Endothelial cell of umbilical vein (primary cell): ENCODE measurements at regions of chr10 and their contacts with region 1.

Region 1: GRCh38 chr10:117174439-117175214 is 22.7 kb upstream of the KCNK18 start:
- DNase-seq: peak; percentile 81
- H3K4me3 ChIP-seq: peak overlapping the region in 1 of 3 experiments; percentile 16
- H3K27ac ChIP-seq: no peak overlapping the region
- H3K4me1 ChIP-seq: peaks cover 9% of the 10 kb centered on the region
- H3K27me3 ChIP-seq: peaks cover 27 to 32% of the 10 kb centered on the region in 2 experiments
- CTCF ChIP-seq: peak; percentile 83 to 88
- POLR2A ChIP-seq: no peak

Region 2: GRCh38 chr10:116742367-116743265 is 432.0 kb before region 1 on chr10 and contains the start of gene HSPA12A:
- CTCF ChIA-PET with region 1: interaction called, 14 read pairs
- POLR2A ChIA-PET with region 1: no interaction called
- dilution Hi-C with region 1: no loop called
- intact Hi-C with region 1: loop called (anchors 2 kb)
- DNase-seq: peak; percentile 62
- H3K4me3 ChIP-seq: peak within 1 kb of the TSS; percentile 29 to 34 (median 31)
- H3K27ac ChIP-seq: no peak within 1 kb of the TSS
- H3K4me1 ChIP-seq: peaks cover 7% of the 10 kb centered on the region
- H3K27me3 ChIP-seq: peaks cover 18 to 21% of the 10 kb centered on the region in 2 experiments
- CTCF ChIP-seq: no peak
- POLR2A ChIP-seq: no peak
- total RNA-seq, gene HSPA12A: 0.22 and 0.30 TPM in 2 replicates

Region 3: GRCh38 chr10:116809483-116810119 is 365.0 kb before region 1 on chr10:
- CTCF ChIA-PET with region 1: interaction called, 10 read pairs
- POLR2A ChIA-PET with region 1: no interaction called
- dilution Hi-C with region 1: loop called (anchors 25 kb)
- intact Hi-C with region 1: no loop called
- DNase-seq: no peak
- H3K4me3 ChIP-seq: no peak overlapping the region
- H3K27ac ChIP-seq: no peak overlapping the region
- H3K4me1 ChIP-seq: no peaks in the 10 kb centered on the region
- H3K27me3 ChIP-seq: no peaks in the 10 kb centered on the region
- CTCF ChIP-seq: peak; percentile 15 to 17
- POLR2A ChIP-seq: no peak

Region 4: GRCh38 chr10:116836902-116837523 is 337.6 kb before region 1 on chr10:
- CTCF ChIA-PET with region 1: interaction called, 238 read pairs
- POLR2A ChIA-PET with region 1: no interaction called
- dilution Hi-C with region 1: no loop called
- intact Hi-C with region 1: loop called (anchors 1 kb)
- DNase-seq: peak; percentile 44
- H3K4me3 ChIP-seq: no peak overlapping the region
- H3K27ac ChIP-seq: no peak overlapping the region
- H3K4me1 ChIP-seq: no peaks in the 10 kb centered on the region
- H3K27me3 ChIP-seq: peaks cover 13 to 18% of the 10 kb centered on the region in 2 experiments
- CTCF ChIP-seq: peak; percentile 31 to 38
- POLR2A ChIP-seq: no peak

Region 5: GRCh38 chr10:117112220-117112619 is 62.4 kb before region 1 on chr10:
- CTCF ChIA-PET with region 1: interaction called, 10 read pairs
- POLR2A ChIA-PET with region 1: no interaction called
- dilution Hi-C with region 1: no loop called
- intact Hi-C with region 1: no loop called
- DNase-seq: no peak
- H3K4me3 ChIP-seq: no peak overlapping the region
- H3K27ac ChIP-seq: no peak overlapping the region
- H3K4me1 ChIP-seq: no peaks in the 10 kb centered on the region
- H3K27me3 ChIP-seq: peaks cover 0 to 3% of the 10 kb centered on the region in 2 experiments
- CTCF ChIP-seq: peak in 1 of 2 donors; percentile 27
- POLR2A ChIP-seq: no peak

Region 6: DNA sequence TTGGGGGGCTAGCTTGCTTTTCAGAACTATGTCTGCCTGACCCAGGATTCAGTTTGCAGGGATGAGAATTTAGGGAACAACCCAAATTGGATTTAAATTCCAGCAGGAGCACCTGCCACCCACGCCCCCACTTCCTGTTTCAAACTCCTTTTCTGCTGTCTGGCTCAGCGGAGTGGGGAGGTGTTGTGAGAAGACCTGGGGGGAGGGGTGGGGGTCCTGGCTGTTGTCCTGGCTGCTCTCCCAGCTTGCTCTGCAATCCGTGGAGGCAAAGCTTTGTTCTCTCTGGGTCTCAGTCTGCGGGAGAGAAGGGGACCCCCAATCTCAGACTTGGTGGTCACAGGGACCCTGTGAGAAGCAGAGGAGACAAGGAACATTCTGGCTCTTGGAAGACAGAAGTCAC is 23.5 kb after region 1 on chr10:
- CTCF ChIA-PET with region 1: interaction called, 10 read pairs
- POLR2A ChIA-PET with region 1: no interaction called
- dilution Hi-C with region 1: no loop called
- intact Hi-C with region 1: no loop called
- DNase-seq: no peak
- H3K4me3 ChIP-seq: no peak overlapping the region
- H3K27ac ChIP-seq: no peak overlapping the region
- H3K4me1 ChIP-seq: no peaks in the 10 kb centered on the region
- H3K27me3 ChIP-seq: no peaks in the 10 kb centered on the region
- CTCF ChIP-seq: no peak
- POLR2A ChIP-seq: no peak

Region 7: GRCh38 chr10:117391436-117392205 is 217.0 kb after region 1 on chr10:
- CTCF ChIA-PET with region 1: no interaction called
- POLR2A ChIA-PET with region 1: no interaction called
- dilution Hi-C with region 1: no loop called
- intact Hi-C with region 1: no loop called
- DNase-seq: no peak
- H3K4me3 ChIP-seq: no peak overlapping the region
- H3K27ac ChIP-seq: no peak overlapping the region
- H3K4me1 ChIP-seq: no peaks in the 10 kb centered on the region
- H3K27me3 ChIP-seq: peaks cover 5 to 20% of the 10 kb centered on the region in 2 experiments
- CTCF ChIP-seq: no peak
- POLR2A ChIP-seq: no peak

Region 8: DNA sequence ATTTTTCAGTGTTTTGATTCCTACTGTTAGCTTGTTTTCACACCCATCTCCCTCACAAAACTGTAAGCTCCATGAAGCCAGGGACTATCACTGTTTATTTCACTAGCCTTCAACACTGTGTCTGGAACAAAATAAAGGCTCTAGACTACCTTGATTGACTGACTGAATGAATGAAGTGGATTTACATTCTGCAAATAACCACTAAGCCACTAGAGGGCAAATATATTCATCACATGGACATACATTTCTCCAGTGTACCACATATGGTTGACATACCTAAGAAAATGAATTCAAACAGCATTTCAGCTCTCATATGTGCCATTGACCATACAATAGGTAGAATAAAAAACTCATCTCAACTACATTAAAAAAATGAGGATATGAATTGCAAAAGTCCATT is 686.2 kb after region 1 on chr10:
- CTCF ChIA-PET with region 1: no interaction called
- POLR2A ChIA-PET with region 1: no interaction called
- dilution Hi-C with region 1: no loop called
- intact Hi-C with region 1: no loop called
- DNase-seq: peak; percentile 5
- H3K4me3 ChIP-seq: no peak overlapping the region
- H3K27ac ChIP-seq: no peak overlapping the region
- H3K4me1 ChIP-seq: no peaks in the 10 kb centered on the region
- H3K27me3 ChIP-seq: no peaks in the 10 kb centered on the region
- CTCF ChIP-seq: peak in 1 of 2 donors; percentile 19
- POLR2A ChIP-seq: no peak

Region 9: DNA sequence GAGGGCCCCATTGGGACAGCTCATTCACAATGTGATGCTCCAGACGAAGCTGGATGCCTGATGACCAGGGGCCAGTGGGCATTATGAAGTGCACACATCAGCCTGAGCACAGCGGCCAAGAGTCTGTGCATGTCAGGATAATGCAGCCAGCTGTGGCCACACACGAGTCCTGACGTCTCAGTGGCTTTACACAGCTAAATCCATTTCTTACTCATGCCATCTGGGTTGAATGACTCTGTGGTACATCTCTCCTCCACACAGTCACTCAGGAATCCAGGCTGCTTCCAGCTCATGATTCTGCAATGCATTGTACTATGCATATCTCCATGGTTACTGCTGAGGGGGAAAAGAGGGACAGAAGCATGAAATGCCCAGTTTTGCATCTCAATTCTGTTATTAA is 1297.2 kb after region 1 on chr10:
- CTCF ChIA-PET with region 1: no interaction called
- POLR2A ChIA-PET with region 1: no interaction called
- dilution Hi-C with region 1: no loop called
- intact Hi-C with region 1: no loop called
- DNase-seq: no peak
- H3K4me3 ChIP-seq: no peak overlapping the region
- H3K27ac ChIP-seq: no peak overlapping the region
- H3K4me1 ChIP-seq: no peaks in the 10 kb centered on the region
- H3K27me3 ChIP-seq: no peaks in the 10 kb centered on the region
- CTCF ChIP-seq: no peak
- POLR2A ChIP-seq: no peak